Sigmoid colon (tissue), 7 donors: ENCODE measurements at regions of chr20 and their contacts with region 1.

Region 1: DNA sequence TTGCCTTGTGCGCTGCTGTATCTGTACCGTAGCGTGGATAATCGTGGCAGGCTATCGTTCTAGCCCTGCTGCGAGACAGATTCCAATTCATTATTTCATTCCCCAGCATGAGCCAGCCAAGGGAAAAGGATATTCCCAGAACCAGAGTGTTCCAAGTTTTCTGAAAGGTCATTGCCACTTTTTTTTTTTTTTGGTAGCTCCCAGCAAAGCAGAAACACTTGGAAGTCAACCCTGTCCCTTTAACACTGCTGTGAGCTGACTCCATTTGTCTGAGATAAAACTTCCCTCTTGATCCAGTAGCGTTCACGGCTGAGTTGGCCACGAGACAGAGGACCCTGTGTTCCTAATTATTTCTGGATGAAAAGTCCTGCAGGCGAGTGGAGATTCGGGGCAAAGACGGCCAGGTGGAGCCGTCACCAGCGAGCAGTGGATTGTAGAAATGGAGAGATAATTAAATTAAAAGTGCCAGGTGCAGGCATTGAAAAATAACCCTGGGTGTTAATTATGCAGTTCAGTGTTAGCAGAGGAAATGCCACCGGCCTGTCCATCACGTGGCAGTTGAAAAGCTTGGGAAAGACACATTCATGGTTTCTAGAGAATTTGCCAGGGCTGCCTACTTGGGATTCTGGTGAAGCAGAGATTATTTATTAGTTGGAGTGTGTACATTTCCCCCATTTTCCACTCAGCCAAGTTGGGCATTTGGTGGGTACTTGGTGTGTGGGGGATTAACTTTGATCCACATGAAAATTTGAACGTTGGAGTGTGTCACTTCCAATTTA is 164.2 kb downstream of the SLC24A3 start:
- DNase-seq: no peak
- H3K4me3 ChIP-seq: no peak overlapping the region
- H3K27ac ChIP-seq: peak overlapping the region in 1 of 4 donors; percentile 31
- H3K4me1 ChIP-seq: peaks cover 0 to 50% (median 28%) of the 10 kb centered on the region in 4 donors
- H3K27me3 ChIP-seq: no peaks in the 10 kb centered on the region
- CTCF ChIP-seq: no peak
- EP300 ChIP-seq: no peak
- POLR2A ChIP-seq: no peak

Region 2: DNA sequence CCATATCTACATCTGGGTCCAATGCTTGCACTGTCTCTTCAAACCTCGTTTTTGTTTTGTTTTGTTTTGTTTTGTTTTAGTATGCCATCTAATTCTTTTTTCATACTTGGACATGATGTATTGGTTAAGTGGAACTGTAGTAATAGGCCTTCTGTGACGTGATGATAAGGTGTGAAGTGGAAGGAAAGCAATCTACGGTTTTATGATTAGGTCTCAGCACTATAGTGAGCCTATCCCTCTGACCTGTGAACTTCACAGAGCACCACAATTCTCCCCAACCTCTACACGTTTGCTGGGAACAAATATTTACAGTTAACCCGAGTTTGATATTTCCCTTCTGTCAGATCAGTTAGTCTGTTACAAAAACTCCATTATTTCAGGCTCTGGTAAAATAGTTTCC is 183.3 kb before region 1 on chr20:
- intact Hi-C with region 1: no loop called
- DNase-seq: no peak
- H3K4me3 ChIP-seq: no peak overlapping the region
- H3K27ac ChIP-seq: no peak overlapping the region
- H3K4me1 ChIP-seq: no peaks in the 10 kb centered on the region
- H3K27me3 ChIP-seq: no peaks in the 10 kb centered on the region
- CTCF ChIP-seq: no peak
- EP300 ChIP-seq: no peak
- POLR2A ChIP-seq: no peak

Region 3: DNA sequence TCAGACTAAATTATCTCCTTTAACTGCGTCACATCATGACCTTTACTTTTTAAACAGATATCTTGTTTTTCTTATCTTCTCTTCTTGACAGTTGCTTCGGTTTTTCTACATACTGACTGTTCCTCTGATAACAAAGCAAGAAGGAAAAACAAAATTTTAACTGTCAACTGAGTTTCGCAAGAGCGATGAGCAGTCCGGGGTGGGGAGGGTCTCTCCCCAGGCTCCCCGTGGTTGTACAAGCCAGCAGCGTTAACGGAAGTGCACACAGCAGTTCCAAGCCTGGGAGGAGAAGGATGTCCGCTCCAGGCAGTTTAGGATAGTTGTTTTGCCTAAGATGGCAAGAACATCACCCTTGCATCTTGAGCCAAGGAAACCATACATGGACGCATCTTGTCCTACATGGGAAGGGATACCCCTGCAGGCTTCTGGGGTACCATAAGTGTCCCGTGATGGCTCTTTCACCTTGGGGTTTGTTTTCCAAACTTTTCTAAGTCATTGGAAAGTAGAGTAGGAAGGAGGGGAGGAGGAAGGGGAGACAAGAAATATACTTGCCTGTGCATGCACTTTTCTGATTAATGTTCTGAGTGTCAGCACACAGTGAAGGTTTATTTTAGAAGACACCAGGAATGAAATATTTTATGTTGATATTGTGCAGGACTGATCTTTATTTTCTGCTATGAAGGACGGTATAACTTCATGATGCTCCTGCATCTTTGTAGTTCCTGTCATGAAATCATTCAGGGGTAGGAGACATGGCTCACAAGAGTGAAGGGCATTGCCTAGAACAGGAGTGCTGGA is 143.4 kb before region 1 on chr20:
- intact Hi-C with region 1: loop called (anchors 5 kb)
- DNase-seq: peak; percentile 79
- H3K4me3 ChIP-seq: peak overlapping the region in 3 of 4 donors; percentile 7 to 27 (median 14)
- H3K27ac ChIP-seq: peak overlapping the region in 3 of 4 donors; percentile 54 to 82 (median 79)
- H3K4me1 ChIP-seq: peaks cover 0 to 46% (median 39%) of the 10 kb centered on the region in 4 donors
- H3K27me3 ChIP-seq: no peaks in the 10 kb centered on the region
- CTCF ChIP-seq: no peak
- EP300 ChIP-seq: peak in 3 of 4 donors; percentile 58 to 84 (median 79)
- POLR2A ChIP-seq: no peak

Region 4: GRCh38 chr20:19449051-19449450 is 72.4 kb after region 1 on chr20:
- intact Hi-C with region 1: loop called (anchors 5 kb)
- DNase-seq: peak; percentile 79
- H3K4me3 ChIP-seq: no peak overlapping the region
- H3K27ac ChIP-seq: peak overlapping the region in 3 of 4 donors; percentile 59 to 69 (median 68)
- H3K4me1 ChIP-seq: peaks cover 0 to 57% (median 55%) of the 10 kb centered on the region in 4 donors
- H3K27me3 ChIP-seq: no peaks in the 10 kb centered on the region
- CTCF ChIP-seq: no peak
- EP300 ChIP-seq: no peak
- POLR2A ChIP-seq: no peak